ENCODE measurements at regions of chr3 and their contacts with region 1.

Region 1: GRCh38 chr3:58198362-58198761 is 12.4 kb downstream of the DNASE1L3 start:
- DNase-seq: no peak

Region 2: DNA sequence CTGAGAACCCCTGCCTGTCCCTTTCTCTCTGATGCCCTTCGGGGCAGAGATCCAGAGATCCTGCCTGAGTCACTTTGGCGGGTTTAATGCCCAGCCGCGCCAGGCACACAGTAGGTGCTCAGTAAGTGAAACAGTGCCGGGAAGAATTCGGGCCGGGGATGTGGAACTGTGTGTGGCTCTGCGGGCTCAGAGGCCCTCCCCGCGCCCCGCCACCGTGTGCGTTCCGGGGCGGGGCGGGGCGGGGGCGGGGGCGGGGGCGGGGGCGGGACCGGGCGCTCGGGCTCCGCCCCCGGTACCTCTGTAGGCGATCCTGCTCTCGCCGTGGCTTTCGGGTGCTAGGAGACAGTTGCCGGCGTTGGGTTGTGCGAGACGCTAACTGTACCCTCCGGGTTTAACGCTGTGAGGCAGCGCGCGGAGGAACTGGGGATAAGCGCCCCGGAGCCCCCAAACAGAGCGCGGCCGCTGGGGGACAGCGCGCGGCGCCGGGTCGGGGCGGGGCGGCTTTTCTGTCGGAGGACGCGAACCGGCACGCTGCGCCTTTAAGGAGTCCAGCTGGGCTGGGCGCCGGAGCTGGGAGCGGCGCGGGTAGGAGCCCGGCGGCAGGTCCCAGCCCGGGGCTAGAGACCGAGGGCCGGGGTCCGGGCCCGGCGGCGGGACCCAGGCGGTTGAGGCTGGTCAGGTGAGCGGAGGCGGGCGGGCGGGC is 39.0 kb after region 1 on chr3 and contains the start of gene ABHD6:
- in situ Hi-C with region 1: no loop called
- DNase-seq: peak; percentile 81
- total RNA-seq, gene ABHD6: 15.0 and 17.2 TPM in 2 replicates

Region 3: DNA sequence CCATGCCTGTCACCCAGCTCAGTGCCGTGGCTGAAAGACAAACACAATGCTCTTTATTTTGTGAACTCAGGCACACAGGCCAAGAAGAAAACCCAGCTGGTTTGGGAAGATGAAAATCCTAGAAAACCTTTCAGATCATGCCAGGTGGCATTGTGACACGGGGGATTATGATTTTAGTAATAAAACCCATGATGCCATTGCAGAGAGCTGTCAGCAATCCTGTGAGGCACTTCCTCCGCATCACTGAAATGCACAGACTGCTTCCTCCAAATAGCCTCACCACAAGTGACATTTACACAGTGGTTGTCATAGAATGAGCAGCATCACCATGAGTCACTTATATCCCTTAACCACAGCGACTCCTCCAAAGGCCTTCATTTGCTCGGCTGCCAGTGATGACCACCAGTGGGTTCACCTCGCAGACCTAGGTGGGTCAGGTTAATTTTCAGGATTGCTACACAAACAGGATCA is 61.9 kb after region 1 on chr3:
- in situ Hi-C with region 1: no loop called
- DNase-seq: peak; percentile 89

Region 4: DNA sequence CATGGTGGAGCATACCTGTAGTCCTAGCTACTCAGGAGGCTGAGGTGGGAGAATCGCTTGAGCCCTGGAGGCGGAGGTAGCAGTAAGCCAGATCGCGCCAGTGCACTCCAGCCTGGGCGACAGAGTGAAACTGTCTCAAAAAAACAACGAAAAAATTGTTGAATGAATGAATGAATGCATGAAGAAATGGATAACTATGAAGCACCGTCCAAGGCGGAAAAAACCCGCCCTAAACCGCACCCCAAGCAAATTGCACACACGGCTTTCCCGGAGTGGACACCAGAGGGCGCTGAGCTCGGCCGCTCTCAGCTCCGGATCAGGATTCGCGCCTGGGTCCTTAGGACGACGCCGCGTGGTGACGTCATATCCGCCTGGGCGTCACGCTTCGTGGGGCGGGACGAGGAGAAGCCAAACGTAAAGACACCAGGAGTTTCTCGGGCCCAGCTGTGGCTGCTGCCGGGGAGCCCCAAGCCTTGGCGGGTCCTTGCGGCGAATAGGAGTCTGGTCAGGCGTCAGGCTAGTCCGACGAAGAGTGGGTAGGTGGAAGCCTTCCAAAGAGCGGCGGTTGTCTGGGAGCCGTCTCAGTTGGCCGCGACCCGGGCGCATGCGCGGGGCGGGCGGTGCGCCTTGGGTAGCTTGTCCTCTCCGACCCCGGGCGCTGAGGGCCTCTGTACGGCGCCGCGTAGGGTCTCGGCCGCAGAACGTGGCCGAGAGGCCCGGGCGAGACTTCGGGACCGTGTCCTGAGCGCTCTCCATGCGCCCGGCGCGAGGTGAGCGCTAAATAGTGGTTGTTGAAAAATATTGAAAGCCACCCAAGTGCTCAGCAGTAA is 107.7 kb after region 1 on chr3 and contains the starts of genes HTD2 and RPP14:
- in situ Hi-C with region 1: loop called (anchors 10 kb)
- DNase-seq: peak; percentile 96
- total RNA-seq, gene HTD2: 7.3 and 19.6 TPM in 2 replicates
- total RNA-seq, gene RPP14: 17.0 and 25.1 TPM in 2 replicates

Region 5: GRCh38 chr3:58526515-58526957 is 328.2 kb after region 1 on chr3:
- in situ Hi-C with region 1: loop called (anchors 10 kb)
- DNase-seq: no peak